Naive thymus-derived CD4-positive, alpha-beta T cell (primary cell): ENCODE measurements at regions of chr19 and their contacts with region 1.

Region 1: DNA sequence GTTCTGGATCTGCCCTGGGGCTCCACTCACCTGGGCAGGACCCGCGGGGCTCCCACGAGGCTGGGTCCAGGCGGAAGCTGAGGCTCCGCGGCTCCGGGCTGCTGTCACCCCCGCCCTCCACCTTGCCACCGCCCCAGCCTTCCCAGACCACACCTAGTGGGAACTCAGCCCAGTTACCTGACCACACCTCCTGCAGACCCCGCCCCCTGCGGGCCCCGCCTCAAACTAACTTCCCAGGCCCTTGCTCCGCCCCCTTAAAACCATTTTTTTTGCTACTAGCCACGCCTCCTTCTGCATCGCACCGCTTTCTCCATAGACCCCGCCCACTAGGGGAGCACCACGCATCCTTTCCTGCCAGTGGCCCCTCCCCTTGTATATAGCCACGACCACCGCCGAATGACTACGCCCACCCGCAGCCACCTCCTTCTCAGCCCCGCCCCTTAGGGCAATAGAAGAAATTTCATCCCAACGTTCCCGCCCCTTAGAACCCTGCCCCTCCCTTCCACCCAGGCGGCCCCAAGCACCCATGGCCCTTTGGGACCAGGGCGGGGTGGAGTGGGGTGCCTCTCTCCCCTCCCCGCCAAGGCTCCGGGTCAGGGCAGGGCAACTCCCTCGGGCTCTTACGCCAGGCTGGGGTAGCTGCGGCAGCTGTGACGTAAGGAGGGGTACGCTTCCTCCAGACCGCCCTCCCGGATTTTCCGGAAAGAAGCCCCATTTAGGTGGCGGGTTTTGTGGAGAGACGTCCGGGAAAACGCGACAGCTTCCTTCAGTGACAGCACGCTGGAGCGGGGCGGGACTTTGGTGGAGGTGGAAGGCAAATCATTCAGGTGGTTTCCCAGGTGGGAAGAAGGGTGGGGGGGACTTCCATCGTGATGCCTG is at the start of gene SH2D3A:
- DNase-seq: peak; percentile 80 to 98 (median 97)
- ATAC-seq: peak; percentile 84
- H3K4me3 ChIP-seq: peak within 1 kb of the TSS; percentile 82
- H3K4me3 Mint-ChIP-seq: peak within 1 kb of the TSS; percentile 88 to 99 (median 94)
- H3K27ac ChIP-seq: peak within 1 kb of the TSS; percentile 91
- H3K27ac Mint-ChIP-seq: peak within 1 kb of the TSS; percentile 89 to 98 (median 95)
- H3K4me1 ChIP-seq: peaks cover 24 to 41% of the 10 kb centered on the region in 2 donors
- H3K4me1 Mint-ChIP-seq: peaks cover 28 to 65% (median 55%) of the 10 kb centered on the region in 7 donors
- H3K27me3 ChIP-seq: no peaks in the 10 kb centered on the region
- H3K27me3 Mint-ChIP-seq: no peaks in the 10 kb centered on the region
- total RNA-seq, gene SH2D3A: 27.9 to 64.7 (median 57.4) TPM

Region 2: DNA sequence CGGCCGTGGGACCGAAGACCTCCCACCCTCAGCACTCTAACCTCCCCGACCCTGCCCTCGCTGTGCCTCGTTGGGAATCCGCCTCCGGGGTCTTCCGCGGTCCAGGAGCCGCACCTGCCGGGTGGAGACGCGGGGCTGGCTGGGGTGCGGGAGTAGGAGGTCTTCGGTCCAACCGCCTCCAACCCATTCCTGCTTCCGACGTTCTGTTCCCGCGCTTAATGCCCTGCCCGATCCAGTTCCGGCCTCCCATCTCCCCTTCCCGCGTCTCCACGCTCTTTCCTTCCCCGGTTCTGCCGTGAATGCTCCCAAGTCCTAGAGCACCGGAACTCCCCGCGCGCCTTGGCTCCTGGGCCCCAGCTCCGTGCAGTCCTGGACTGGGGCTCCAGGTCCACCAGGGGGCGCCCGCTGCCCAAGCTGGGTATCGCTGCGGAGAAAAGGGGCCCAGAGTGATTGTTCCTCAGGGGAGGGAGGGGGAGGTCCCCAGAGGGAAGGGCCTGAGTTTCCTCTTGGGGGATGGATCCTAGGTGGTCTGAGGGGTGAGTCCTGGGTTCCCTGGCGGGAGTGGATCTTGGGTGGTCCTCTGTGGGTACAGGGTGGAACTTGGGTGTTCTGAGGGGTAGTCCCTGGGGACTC is 250.8 kb before region 1 on chr19:
- CTCF ChIA-PET with region 1: no interaction called
- POLR2A ChIA-PET with region 1: no interaction called
- intact Hi-C with region 1: loop called in 1 of 2 experiments (anchors 2 kb)
- DNase-seq: peak; percentile 72 to 96 (median 85)
- ATAC-seq: peak; percentile 91
- H3K4me3 ChIP-seq: peak overlapping the region; percentile 68
- H3K4me3 Mint-ChIP-seq: peak overlapping the region; percentile 81 to 100 (median 96)
- H3K27ac ChIP-seq: peak overlapping the region; percentile 49
- H3K27ac Mint-ChIP-seq: peak overlapping the region; percentile 22 to 90 (median 69)
- H3K4me1 ChIP-seq: peaks cover 8 to 20% of the 10 kb centered on the region in 2 donors
- H3K4me1 Mint-ChIP-seq: peaks cover 22 to 35% (median 33%) of the 10 kb centered on the region in 7 donors
- H3K27me3 ChIP-seq: no peaks in the 10 kb centered on the region
- H3K27me3 Mint-ChIP-seq: peaks cover 0 to 2% (median 0%) of the 10 kb centered on the region in 5 donors

Region 3: GRCh38 chr19:6610934-6611852 is 156.4 kb before region 1 on chr19:
- CTCF ChIA-PET with region 1: no interaction called
- POLR2A ChIA-PET with region 1: no interaction called
- intact Hi-C with region 1: no loop called
- DNase-seq: no peak
- ATAC-seq: no peak
- H3K4me3 ChIP-seq: no peak overlapping the region
- H3K4me3 Mint-ChIP-seq: no peak overlapping the region
- H3K27ac ChIP-seq: no peak overlapping the region
- H3K27ac Mint-ChIP-seq: no peak overlapping the region
- H3K4me1 ChIP-seq: no peaks in the 10 kb centered on the region
- H3K4me1 Mint-ChIP-seq: peaks cover 0 to 17% (median 0%) of the 10 kb centered on the region in 7 donors
- H3K27me3 ChIP-seq: no peaks in the 10 kb centered on the region
- H3K27me3 Mint-ChIP-seq: peaks cover 11 to 29% (median 25%) of the 10 kb centered on the region in 5 donors

Region 4: GRCh38 chr19:6753178-6754031 is 14.2 kb before region 1 on chr19:
- CTCF ChIA-PET with region 1: no interaction called
- POLR2A ChIA-PET with region 1: interaction called, 3 read pairs
- intact Hi-C with region 1: loop called (anchors 1 kb)
- DNase-seq: peak; percentile 64 to 86 (median 75)
- ATAC-seq: peak; percentile 96
- H3K4me3 ChIP-seq: peak overlapping the region; percentile 64
- H3K4me3 Mint-ChIP-seq: peak overlapping the region; percentile 64 to 89 (median 74)
- H3K27ac ChIP-seq: peak overlapping the region; percentile 48
- H3K27ac Mint-ChIP-seq: peak overlapping the region; percentile 41 to 93 (median 88)
- H3K4me1 ChIP-seq: no peaks in the 10 kb centered on the region
- H3K4me1 Mint-ChIP-seq: peaks cover 5 to 14% (median 11%) of the 10 kb centered on the region in 7 donors
- H3K27me3 ChIP-seq: no peaks in the 10 kb centered on the region
- H3K27me3 Mint-ChIP-seq: no peaks in the 10 kb centered on the region

Region 5: GRCh38 chr19:6790194-6791128 is 22.9 kb after region 1 on chr19:
- CTCF ChIA-PET with region 1: interaction called, 5 read pairs
- POLR2A ChIA-PET with region 1: interaction called, 12 read pairs
- intact Hi-C with region 1: no loop called
- DNase-seq: peak in 1 of 9 donors; percentile 23
- ATAC-seq: no peak
- H3K4me3 ChIP-seq: no peak overlapping the region
- H3K4me3 Mint-ChIP-seq: peak overlapping the region in 9 of 10 donors; percentile 29 to 82 (median 62)
- H3K27ac ChIP-seq: peak overlapping the region; percentile 41
- H3K27ac Mint-ChIP-seq: peak overlapping the region; percentile 29 to 93 (median 81)
- H3K4me1 ChIP-seq: peaks cover 6 to 55% of the 10 kb centered on the region in 2 donors
- H3K4me1 Mint-ChIP-seq: peaks cover 50 to 89% (median 76%) of the 10 kb centered on the region in 7 donors
- H3K27me3 ChIP-seq: no peaks in the 10 kb centered on the region
- H3K27me3 Mint-ChIP-seq: no peaks in the 10 kb centered on the region

Region 6: GRCh38 chr19:6828698-6829562 is 61.3 kb after region 1 on chr19:
- CTCF ChIA-PET with region 1: no interaction called
- POLR2A ChIA-PET with region 1: interaction called, 6 read pairs
- intact Hi-C with region 1: loop called (anchors 2 to 10 kb)
- DNase-seq: peak in 6 of 9 donors; percentile 13 to 38 (median 16)
- ATAC-seq: peak; percentile 79
- H3K4me3 ChIP-seq: no peak overlapping the region
- H3K4me3 Mint-ChIP-seq: no peak overlapping the region
- H3K27ac ChIP-seq: no peak overlapping the region
- H3K27ac Mint-ChIP-seq: peak overlapping the region; percentile 54 to 92 (median 81)
- H3K4me1 ChIP-seq: no peaks in the 10 kb centered on the region
- H3K4me1 Mint-ChIP-seq: peaks cover 4 to 19% (median 9%) of the 10 kb centered on the region in 7 donors
- H3K27me3 ChIP-seq: no peaks in the 10 kb centered on the region
- H3K27me3 Mint-ChIP-seq: no peaks in the 10 kb centered on the region

Region 7: GRCh38 chr19:7718668-7719067 is 951.1 kb after region 1 on chr19:
- CTCF ChIA-PET with region 1: no interaction called
- POLR2A ChIA-PET with region 1: no interaction called
- intact Hi-C with region 1: no loop called
- DNase-seq: peak in 1 of 9 donors; percentile 22
- ATAC-seq: peak; percentile 49
- H3K4me3 ChIP-seq: no peak overlapping the region
- H3K4me3 Mint-ChIP-seq: peak overlapping the region in 7 of 10 donors; percentile 17 to 58 (median 42)
- H3K27ac ChIP-seq: no peak overlapping the region
- H3K27ac Mint-ChIP-seq: peak overlapping the region in 4 of 9 donors; percentile 40 to 77 (median 70)
- H3K4me1 ChIP-seq: peaks cover 7% of the 10 kb centered on the region in 2 donors
- H3K4me1 Mint-ChIP-seq: peaks cover 0 to 21% (median 11%) of the 10 kb centered on the region in 7 donors
- H3K27me3 ChIP-seq: no peaks in the 10 kb centered on the region
- H3K27me3 Mint-ChIP-seq: no peaks in the 10 kb centered on the region